ENCODE measurements at regions of chr13 and their contacts with region 1.

Region 1: DNA sequence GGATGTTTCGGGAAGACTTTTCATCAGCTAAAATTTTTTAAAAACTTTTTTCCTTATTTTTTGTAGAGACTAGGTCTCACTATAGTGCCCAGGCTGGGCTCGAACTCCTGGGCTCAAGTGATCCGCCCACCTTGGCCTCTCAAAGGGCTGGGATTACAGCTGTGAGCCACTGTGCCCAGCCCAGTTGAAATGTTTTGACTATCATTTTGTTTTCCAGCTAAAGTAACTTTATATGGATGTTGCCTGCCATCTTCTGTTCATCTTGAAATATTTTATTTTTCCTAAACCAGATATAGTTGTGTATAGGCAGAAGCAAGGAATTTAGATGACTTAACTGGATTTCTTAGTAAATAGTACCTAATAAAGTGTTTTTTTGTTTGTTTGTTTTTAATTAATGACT is 7.0 kb downstream of the CAB39L start:
- DNase-seq: peak; percentile 38
- ATAC-seq: peak; percentile 60
- H3K4me3 ChIP-seq: no peak overlapping the region
- H3K27ac ChIP-seq: no peak overlapping the region
- H3K4me1 ChIP-seq: peaks cover 6% of the 10 kb centered on the region
- H3K27me3 ChIP-seq: no peaks in the 10 kb centered on the region
- CTCF ChIP-seq: peak; percentile 41

Region 2: DNA sequence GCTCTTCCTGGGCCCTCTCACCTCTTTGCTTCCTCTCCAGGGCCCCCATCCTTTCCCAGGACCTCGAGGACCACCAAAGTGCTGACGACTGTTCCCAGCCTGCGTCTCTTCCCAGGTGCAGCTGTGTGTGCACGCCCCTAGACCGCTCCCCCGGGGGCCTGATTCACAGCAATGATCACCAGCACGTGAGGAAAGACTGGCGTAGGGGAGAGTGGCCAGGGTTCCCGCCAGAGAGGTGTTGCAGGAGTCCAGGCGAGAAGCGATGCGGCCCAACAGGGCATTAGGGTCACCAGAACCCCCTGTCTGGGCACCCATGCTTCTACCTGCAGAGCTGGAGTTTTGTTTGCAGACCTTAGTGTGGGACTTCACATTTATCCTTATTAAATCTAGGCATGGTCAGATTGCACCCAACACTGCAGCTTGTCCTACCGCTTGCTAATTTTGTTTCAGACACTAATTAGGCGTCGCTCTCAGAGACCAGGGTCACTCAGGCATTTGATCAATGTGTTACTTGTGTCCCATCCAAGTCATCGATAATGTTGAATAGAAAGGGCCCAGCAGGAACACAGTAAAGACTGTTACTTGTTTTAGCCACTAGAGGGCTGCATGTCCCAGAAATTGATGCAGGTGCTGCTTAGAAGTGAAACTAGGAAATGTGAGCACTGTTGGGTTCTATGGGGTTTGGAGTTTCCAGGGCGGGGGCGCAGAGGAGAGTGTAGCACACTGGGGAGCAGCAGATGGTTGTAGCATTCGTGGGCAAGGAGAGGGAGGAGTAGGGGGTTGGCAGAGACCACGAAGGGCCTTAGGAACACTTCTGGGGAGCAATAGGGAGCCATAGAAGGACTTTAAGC is 135.9 kb before region 1 on chr13:
- CTCF ChIA-PET with region 1: no interaction called
- POLR2A ChIA-PET with region 1: no interaction called
- intact Hi-C with region 1: loop called (anchors 1 kb)
- DNase-seq: peak; percentile 63
- ATAC-seq: peak; percentile 81
- H3K4me3 ChIP-seq: peak overlapping the region; percentile 47; the same call in 1 of the 2 replicates
- H3K27ac ChIP-seq: no peak overlapping the region
- H3K4me1 ChIP-seq: no peaks in the 10 kb centered on the region
- H3K27me3 ChIP-seq: no peaks in the 10 kb centered on the region
- CTCF ChIP-seq: peak; percentile 89

Measured in PC-3 (cell line).